Heart left ventricle (tissue), 16 donors: ENCODE measurements at regions of chr6 and their contacts with region 1.

Region 1: DNA sequence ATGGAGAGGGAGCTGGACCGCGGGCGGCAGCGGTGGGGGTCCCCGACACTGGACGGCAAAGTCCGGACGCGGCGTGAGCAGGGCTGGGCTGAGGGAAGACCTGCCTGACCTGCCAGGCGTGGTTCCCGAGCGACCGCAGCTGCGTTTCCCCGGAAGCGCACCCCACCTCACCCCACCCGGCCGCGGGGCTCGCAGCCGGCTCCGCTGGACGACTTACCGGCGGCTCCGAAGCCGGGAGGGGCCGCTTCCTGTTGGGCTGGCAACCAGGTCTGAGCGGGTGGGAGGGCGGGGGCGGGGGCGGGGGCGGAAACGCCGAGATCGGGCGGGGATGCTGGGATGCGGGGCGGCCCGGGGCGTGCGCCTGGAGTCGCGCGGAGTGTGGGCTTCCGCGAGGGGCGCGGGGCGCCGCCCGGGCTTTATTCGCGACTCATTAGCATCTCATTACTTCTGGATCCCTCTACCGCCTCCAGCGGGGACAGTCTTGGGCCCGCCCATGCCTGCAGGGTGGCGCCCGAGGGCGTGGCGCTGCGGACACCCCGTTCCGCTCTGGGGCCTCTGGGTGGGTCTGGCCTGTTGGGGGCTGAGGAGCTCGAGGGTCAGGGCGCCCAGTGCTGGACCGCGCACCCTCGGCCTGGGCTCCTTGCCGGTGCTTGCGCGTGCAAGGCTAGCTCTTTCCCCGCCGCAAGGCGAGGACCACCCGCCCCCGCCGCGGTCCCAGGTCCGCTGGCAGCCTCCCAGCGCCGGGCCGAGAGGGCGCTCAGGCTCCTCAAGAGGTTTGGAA is at the start of gene MICAL1:
- DNase-seq: peak; percentile 63 to 86 (median 77)
- ATAC-seq: peak; percentile 61 to 83 (median 72)
- H3K4me3 ChIP-seq: peak within 1 kb of the TSS; percentile 57 to 93 (median 76)
- H3K27ac ChIP-seq: peak within 1 kb of the TSS; percentile 35 to 94 (median 74)
- H3K4me1 ChIP-seq: peaks cover 0 to 53% (median 26%) of the 10 kb centered on the region in 12 donors
- H3K27me3 ChIP-seq: no peaks in the 10 kb centered on the region
- CTCF ChIP-seq: peak in 9 of 12 donors; percentile 14 to 53 (median 36)
- POLR2A ChIP-seq: peak in 1 of 2 donors; percentile 37
- total RNA-seq, gene MICAL1: 4.5 to 21.9 (median 5.5) TPM

Region 2: GRCh38 chr6:109393888-109394285 is 61.8 kb before region 1 on chr6:
- intact Hi-C with region 1: loop called in 3 of 10 experiments (anchors 5 to 10 kb)
- DNase-seq: no peak
- ATAC-seq: no peak
- H3K4me3 ChIP-seq: no peak overlapping the region
- H3K27ac ChIP-seq: no peak overlapping the region
- H3K4me1 ChIP-seq: peaks cover 0 to 21% (median 11%) of the 10 kb centered on the region in 12 donors
- H3K27me3 ChIP-seq: no peaks in the 10 kb centered on the region
- CTCF ChIP-seq: no peak
- POLR2A ChIP-seq: no peak

Region 3: GRCh38 chr6:109477725-109478124 is 22.0 kb after region 1 on chr6:
- intact Hi-C with region 1: loop called in 1 of 10 experiments (anchors 2 kb)
- DNase-seq: no peak
- ATAC-seq: no peak
- H3K4me3 ChIP-seq: peak overlapping the region in 1 of 12 donors; percentile 27
- H3K27ac ChIP-seq: no peak overlapping the region
- H3K4me1 ChIP-seq: peaks cover 0 to 64% (median 37%) of the 10 kb centered on the region in 12 donors
- H3K27me3 ChIP-seq: no peaks in the 10 kb centered on the region
- CTCF ChIP-seq: no peak
- POLR2A ChIP-seq: no peak